ENCODE measurements at regions of chr12 and their contacts with region 1.

Region 1: DNA sequence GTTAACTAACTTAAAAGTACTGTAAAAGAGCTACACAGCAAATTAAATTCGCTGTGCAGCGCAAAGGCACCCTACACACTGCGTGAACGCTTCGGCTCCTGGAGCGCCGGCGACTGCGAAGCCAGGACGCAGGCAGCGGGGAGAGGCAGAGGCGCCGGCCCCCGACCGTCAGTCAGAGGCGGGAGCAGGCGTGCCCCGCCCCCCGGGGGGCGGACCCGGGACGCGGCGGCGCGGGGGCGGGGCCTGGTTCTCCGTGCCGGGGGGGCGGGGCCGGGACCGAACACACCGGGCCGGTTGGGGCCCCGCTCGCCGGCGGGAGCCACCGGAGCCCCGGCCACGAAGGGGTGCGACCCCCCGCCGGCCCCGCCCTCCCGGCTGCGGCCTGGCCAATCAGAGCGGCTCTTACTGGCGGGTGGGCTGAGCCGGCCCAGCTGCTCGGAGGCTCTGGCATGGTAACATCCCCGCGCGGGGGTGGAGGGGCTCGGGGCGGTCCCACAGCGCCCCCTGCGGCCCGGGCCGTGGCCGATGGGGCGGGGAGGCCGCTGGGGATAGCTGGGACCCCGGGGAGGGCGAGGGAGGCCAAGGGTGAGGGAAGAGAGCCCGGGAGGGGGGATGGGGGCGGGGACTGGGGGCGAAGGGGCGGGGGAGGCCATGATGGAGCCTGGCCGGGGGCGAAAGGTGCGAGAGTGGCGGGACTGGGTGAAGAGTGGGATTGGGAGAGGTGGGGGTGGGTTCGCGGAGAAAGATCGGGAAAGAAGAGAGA is at the start of gene PRPF40B:
- DNase-seq: peak; percentile 95
- H3K4me3 ChIP-seq: peak within 1 kb of the TSS; percentile 53 to 61 (median 59)
- H3K27ac ChIP-seq: peak within 1 kb of the TSS; percentile 89 to 91 (median 90)
- H3K4me1 ChIP-seq: peaks cover 0 to 42% (median 38%) of the 10 kb centered on the region in 4 donors
- H3K27me3 ChIP-seq: no peaks in the 10 kb centered on the region
- CTCF ChIP-seq: peak in 1 of 4 experiments; percentile 60
- EP300 ChIP-seq: no peak
- POLR2A ChIP-seq: peak; percentile 70 to 79
- total RNA-seq, gene PRPF40B: 13.3 to 27.5 (median 21.0) TPM

Region 2: GRCh38 chr12:49567611-49568441 is 55.5 kb before region 1 on chr12 and contains the start of gene MCRS1:
- intact Hi-C with region 1: loop called (anchors 5 kb)
- DNase-seq: peak; percentile 93
- H3K4me3 ChIP-seq: peak within 1 kb of the TSS; percentile 66 to 83 (median 75)
- H3K27ac ChIP-seq: peak within 1 kb of the TSS; percentile 85 to 91 (median 88)
- H3K4me1 ChIP-seq: peaks cover 0 to 51% (median 42%) of the 10 kb centered on the region in 4 donors
- H3K27me3 ChIP-seq: no peaks in the 10 kb centered on the region
- CTCF ChIP-seq: no peak
- EP300 ChIP-seq: no peak
- POLR2A ChIP-seq: peak; percentile 42 to 54
- total RNA-seq, gene MCRS1: 33.6 to 59.3 (median 48.0) TPM

Region 3: DNA sequence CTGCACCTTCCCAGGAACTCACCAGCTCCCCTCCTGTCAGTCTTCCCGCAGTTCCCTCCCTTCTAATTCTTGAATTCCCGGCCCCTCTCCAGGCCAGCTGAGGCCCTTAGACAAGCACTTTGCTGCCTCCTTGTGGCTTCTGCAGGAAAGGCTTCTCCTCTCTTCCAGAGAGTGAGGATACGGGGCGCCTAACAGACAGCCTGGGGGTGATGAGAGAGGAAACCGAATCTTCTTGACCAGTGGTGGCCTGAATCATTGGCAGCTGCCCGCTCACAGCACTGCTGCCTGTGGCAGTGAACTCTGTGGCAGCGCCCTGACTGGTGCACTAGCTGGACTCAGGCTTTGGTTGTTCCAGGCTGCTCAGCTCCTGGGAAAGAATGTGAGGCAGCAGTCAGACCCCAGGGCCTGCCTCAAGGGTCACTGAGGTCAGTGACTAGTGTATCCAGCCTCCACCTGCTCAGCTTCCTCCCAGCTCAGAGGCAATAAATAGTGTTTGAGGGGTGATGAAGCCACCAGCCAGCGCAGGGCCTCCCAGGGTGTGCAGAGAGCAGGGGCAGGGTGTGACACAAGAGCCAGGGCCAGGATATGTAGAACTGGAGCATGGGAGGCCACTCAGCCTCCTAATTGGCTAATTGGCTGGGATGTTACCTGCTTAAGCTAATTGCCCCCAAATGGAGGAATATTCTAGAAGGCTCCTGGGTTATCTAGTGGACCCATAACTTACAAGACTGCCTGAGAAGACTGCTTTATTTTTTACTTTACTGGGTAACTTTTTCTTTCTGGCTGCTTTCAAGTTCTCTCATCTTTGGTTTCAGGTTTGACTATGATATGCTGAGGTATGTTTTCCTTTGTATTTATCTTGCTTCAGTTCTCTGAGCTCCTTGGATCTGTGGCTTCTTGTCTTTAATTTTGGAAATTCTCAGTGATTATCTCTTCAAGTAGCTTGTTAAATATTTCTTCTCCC is 42.5 kb before region 1 on chr12:
- intact Hi-C with region 1: loop called (anchors 5 kb)
- DNase-seq: peak; percentile 81
- H3K4me3 ChIP-seq: no peak overlapping the region
- H3K27ac ChIP-seq: peak overlapping the region; percentile 31 to 63 (median 48)
- H3K4me1 ChIP-seq: peaks cover 0 to 39% (median 25%) of the 10 kb centered on the region in 4 donors
- H3K27me3 ChIP-seq: no peaks in the 10 kb centered on the region
- CTCF ChIP-seq: peak; percentile 53 to 80 (median 78)
- EP300 ChIP-seq: no peak
- POLR2A ChIP-seq: no peak

Region 4: GRCh38 chr12:49662998-49663843 is 39.9 kb after region 1 on chr12:
- intact Hi-C with region 1: no loop called
- DNase-seq: peak; percentile 84
- H3K4me3 ChIP-seq: no peak overlapping the region
- H3K27ac ChIP-seq: peak overlapping the region; percentile 43 to 72 (median 58)
- H3K4me1 ChIP-seq: peaks cover 0 to 25% (median 12%) of the 10 kb centered on the region in 4 donors
- H3K27me3 ChIP-seq: no peaks in the 10 kb centered on the region
- CTCF ChIP-seq: no peak
- EP300 ChIP-seq: no peak
- POLR2A ChIP-seq: no peak

Region 5: GRCh38 chr12:49776413-49776812 is 153.1 kb after region 1 on chr12:
- intact Hi-C with region 1: no loop called
- DNase-seq: peak; percentile 84
- H3K4me3 ChIP-seq: no peak overlapping the region
- H3K27ac ChIP-seq: no peak overlapping the region
- H3K4me1 ChIP-seq: peaks cover 0 to 4% (median 0%) of the 10 kb centered on the region in 4 donors
- H3K27me3 ChIP-seq: no peaks in the 10 kb centered on the region
- CTCF ChIP-seq: peak; percentile 54 to 71 (median 66)
- EP300 ChIP-seq: no peak
- POLR2A ChIP-seq: no peak

Measured in sigmoid colon (tissue), 7 donors.